ENCODE measurements at regions of chr7 and their contacts with region 1.

Region 1: DNA sequence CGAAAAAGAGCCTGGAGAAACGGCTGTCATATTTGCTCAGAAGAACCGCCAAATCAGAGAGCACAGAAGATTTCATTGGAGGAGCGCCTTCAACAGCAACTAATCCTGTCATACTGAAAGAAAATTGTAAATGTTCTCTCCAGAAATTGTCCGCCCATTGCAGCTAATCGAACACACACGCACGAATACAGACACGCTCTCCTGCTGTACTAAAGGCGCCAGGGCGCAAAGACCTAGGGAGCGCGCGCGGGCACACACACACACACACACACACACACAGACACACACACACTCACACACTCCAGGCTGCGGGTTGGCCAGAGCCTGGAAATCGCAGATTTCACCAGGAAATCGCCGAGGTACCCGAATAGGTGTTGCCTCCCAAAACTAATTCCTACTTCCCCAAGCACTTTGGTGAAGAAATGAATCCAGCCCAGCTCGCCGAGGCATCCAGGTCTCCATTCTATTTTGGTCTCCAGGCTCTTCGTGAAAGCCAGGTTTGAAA is at the start of gene CHRM2:
- DNase-seq: peak; percentile 90
- ATAC-seq: peak; percentile 56
- H3K4me3 ChIP-seq: peak within 1 kb of the TSS; percentile 95
- H3K27ac ChIP-seq: peak within 1 kb of the TSS; percentile 88
- H3K4me1 ChIP-seq: peaks cover 10% of the 10 kb centered on the region
- H3K27me3 ChIP-seq: no peaks in the 10 kb centered on the region
- CTCF ChIP-seq: no peak
- POLR2A ChIP-seq: no peak
- RAD21 ChIP-seq: no peak
- total RNA-seq, gene CHRM2: 144 and 184 TPM in 2 replicates

Region 2: GRCh38 chr7:136652635-136653370 is 215.7 kb before region 1 on chr7:
- CTCF ChIA-PET with region 1: no interaction called
- POLR2A ChIA-PET with region 1: no interaction called
- dilution Hi-C with region 1: no loop called
- in situ Hi-C with region 1: no loop called
- intact Hi-C with region 1: loop called (anchors 10 kb)
- DNase-seq: peak; percentile 13
- ATAC-seq: peak; percentile 36; the same call in 1 of the 2 replicates
- H3K4me3 ChIP-seq: no peak overlapping the region
- H3K27ac ChIP-seq: no peak overlapping the region
- H3K4me1 ChIP-seq: no peaks in the 10 kb centered on the region
- H3K27me3 ChIP-seq: no peaks in the 10 kb centered on the region
- CTCF ChIP-seq: no peak
- POLR2A ChIP-seq: no peak
- RAD21 ChIP-seq: no peak

Region 3: GRCh38 chr7:137169282-137169698 is 300.7 kb after region 1 on chr7:
- CTCF ChIA-PET with region 1: no interaction called
- POLR2A ChIA-PET with region 1: no interaction called
- dilution Hi-C with region 1: no loop called
- in situ Hi-C with region 1: no loop called
- intact Hi-C with region 1: no loop called
- DNase-seq: peak; percentile 85
- ATAC-seq: peak; percentile 98
- H3K4me3 ChIP-seq: no peak overlapping the region
- H3K27ac ChIP-seq: no peak overlapping the region; the same call in 1 of the 2 replicates
- H3K4me1 ChIP-seq: peaks cover 5% of the 10 kb centered on the region
- H3K27me3 ChIP-seq: no peaks in the 10 kb centered on the region
- CTCF ChIP-seq: peak; percentile 77
- POLR2A ChIP-seq: no peak
- RAD21 ChIP-seq: peak; percentile 92